ENCODE measurements at regions of chr6 and their contacts with region 1.

Region 1: GRCh38 chr6:33860706-33861474 is 57.1 kb upstream of the MLN start:
- DNase-seq: peak in 1 of 5 donors; percentile 15
- ATAC-seq: no peak
- H3K4me3 ChIP-seq: no peak overlapping the region
- H3K27ac ChIP-seq: no peak overlapping the region
- H3K4me1 ChIP-seq: peaks cover 0 to 37% (median 0%) of the 10 kb centered on the region in 12 donors
- H3K27me3 ChIP-seq: peaks cover 0 to 27% (median 0%) of the 10 kb centered on the region in 9 donors
- CTCF ChIP-seq: no peak
- POLR2A ChIP-seq: no peak

Region 2: GRCh38 chr6:33095681-33096080 is 765.2 kb before region 1 on chr6:
- intact Hi-C with region 1: no loop called
- DNase-seq: no peak
- ATAC-seq: no peak
- H3K4me3 ChIP-seq: no peak overlapping the region
- H3K27ac ChIP-seq: no peak overlapping the region
- H3K4me1 ChIP-seq: peaks cover 0 to 2% (median 0%) of the 10 kb centered on the region in 12 donors
- H3K27me3 ChIP-seq: peaks cover 0 to 11% (median 0%) of the 10 kb centered on the region in 9 donors
- CTCF ChIP-seq: no peak
- POLR2A ChIP-seq: no peak

Region 3: GRCh38 chr6:33812669-33813068 is 48.2 kb before region 1 on chr6:
- intact Hi-C with region 1: no loop called
- DNase-seq: peak in 4 of 5 donors; percentile 25 to 49 (median 36)
- ATAC-seq: peak in 3 of 4 donors; percentile 48 to 62 (median 49)
- H3K4me3 ChIP-seq: no peak overlapping the region
- H3K27ac ChIP-seq: no peak overlapping the region
- H3K4me1 ChIP-seq: peaks cover 0 to 13% (median 8%) of the 10 kb centered on the region in 12 donors
- H3K27me3 ChIP-seq: peaks cover 2 to 51% (median 25%) of the 10 kb centered on the region in 9 donors
- CTCF ChIP-seq: peak in 6 of 12 donors; percentile 15 to 51 (median 29)
- POLR2A ChIP-seq: no peak

Region 4: DNA sequence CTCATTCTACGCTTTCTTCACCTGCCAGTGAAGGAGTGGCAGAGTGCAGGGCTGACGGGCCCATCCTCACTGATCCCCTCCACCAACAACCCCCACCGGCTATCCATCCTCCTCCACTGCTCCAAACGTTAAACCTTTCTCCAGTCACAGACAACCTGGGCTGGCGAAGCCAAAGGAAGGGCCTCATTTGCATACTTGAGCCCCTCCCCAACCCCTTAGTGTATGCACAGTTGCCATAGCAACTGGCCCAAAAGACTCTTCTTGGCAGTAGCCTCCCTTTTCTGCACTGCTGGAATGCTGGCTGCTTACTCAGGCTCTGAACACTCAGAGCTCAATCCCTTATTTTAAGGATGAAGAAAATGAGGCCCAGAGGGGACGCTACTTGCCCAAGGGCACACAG is 154.7 kb after region 1 on chr6:
- intact Hi-C with region 1: loop called in 1 of 10 experiments (anchors 10 kb)
- DNase-seq: peak in 1 of 5 donors; percentile 34
- ATAC-seq: peak in 1 of 4 donors; percentile 42
- H3K4me3 ChIP-seq: no peak overlapping the region
- H3K27ac ChIP-seq: no peak overlapping the region
- H3K4me1 ChIP-seq: no peaks in the 10 kb centered on the region
- H3K27me3 ChIP-seq: peaks cover 0 to 8% (median 0%) of the 10 kb centered on the region in 9 donors
- CTCF ChIP-seq: no peak
- POLR2A ChIP-seq: no peak

Measured in heart left ventricle (tissue), 16 donors.